Caco-2 (cell line): ENCODE measurements at regions of chr1 and their contacts with region 1.

Region 1: GRCh38 chr1:67053785-67054772 is at the start of gene SLC35D1:
- DNase-seq: peak; percentile 84 to 88
- H3K4me3 ChIP-seq: peak within 1 kb of the TSS; percentile 77
- H3K4me3 Mint-ChIP-seq: peak within 1 kb of the TSS; percentile 83
- H3K27ac Mint-ChIP-seq: peak within 1 kb of the TSS; percentile 87
- H3K4me1 ChIP-seq: peaks cover 9% of the 10 kb centered on the region; the same call in 1 of the 2 replicates
- H3K4me1 Mint-ChIP-seq: peaks cover 3% of the 10 kb centered on the region
- H3K27me3 ChIP-seq: no peaks in the 10 kb centered on the region
- H3K27me3 Mint-ChIP-seq: no peaks in the 10 kb centered on the region
- CTCF ChIP-seq: no peak
- total RNA-seq, gene SLC35D1: 7.1 and 7.7 TPM in 2 replicates

Region 2: GRCh38 chr1:66929999-66930822 is 123.9 kb before region 1 on chr1:
- CTCF ChIA-PET with region 1: no interaction called
- POLR2A ChIA-PET with region 1: interaction called, 3 read pairs
- intact Hi-C with region 1: loop called (anchors 10 kb)
- DNase-seq: peak; percentile 91 to 95
- H3K4me3 ChIP-seq: peak overlapping the region; percentile 77
- H3K4me3 Mint-ChIP-seq: peak overlapping the region; percentile 83
- H3K27ac Mint-ChIP-seq: peak overlapping the region; percentile 83
- H3K4me1 ChIP-seq: peaks cover 7% of the 10 kb centered on the region; the same call in 1 of the 2 replicates
- H3K4me1 Mint-ChIP-seq: peaks cover 11% of the 10 kb centered on the region
- H3K27me3 ChIP-seq: no peaks in the 10 kb centered on the region
- H3K27me3 Mint-ChIP-seq: no peaks in the 10 kb centered on the region
- CTCF ChIP-seq: no peak

Region 3: GRCh38 chr1:67137307-67137753 is 83.3 kb after region 1 on chr1:
- CTCF ChIA-PET with region 1: no interaction called
- POLR2A ChIA-PET with region 1: interaction called, 4 read pairs
- intact Hi-C with region 1: loop called (anchors 2 kb)
- DNase-seq: peak; percentile 7 to 51
- H3K4me3 ChIP-seq: no peak overlapping the region
- H3K4me3 Mint-ChIP-seq: no peak overlapping the region
- H3K27ac Mint-ChIP-seq: no peak overlapping the region
- H3K4me1 ChIP-seq: peaks cover 41% of the 10 kb centered on the region
- H3K4me1 Mint-ChIP-seq: peaks cover 12% of the 10 kb centered on the region
- H3K27me3 ChIP-seq: no peaks in the 10 kb centered on the region
- H3K27me3 Mint-ChIP-seq: no peaks in the 10 kb centered on the region
- CTCF ChIP-seq: no peak

Region 4: DNA sequence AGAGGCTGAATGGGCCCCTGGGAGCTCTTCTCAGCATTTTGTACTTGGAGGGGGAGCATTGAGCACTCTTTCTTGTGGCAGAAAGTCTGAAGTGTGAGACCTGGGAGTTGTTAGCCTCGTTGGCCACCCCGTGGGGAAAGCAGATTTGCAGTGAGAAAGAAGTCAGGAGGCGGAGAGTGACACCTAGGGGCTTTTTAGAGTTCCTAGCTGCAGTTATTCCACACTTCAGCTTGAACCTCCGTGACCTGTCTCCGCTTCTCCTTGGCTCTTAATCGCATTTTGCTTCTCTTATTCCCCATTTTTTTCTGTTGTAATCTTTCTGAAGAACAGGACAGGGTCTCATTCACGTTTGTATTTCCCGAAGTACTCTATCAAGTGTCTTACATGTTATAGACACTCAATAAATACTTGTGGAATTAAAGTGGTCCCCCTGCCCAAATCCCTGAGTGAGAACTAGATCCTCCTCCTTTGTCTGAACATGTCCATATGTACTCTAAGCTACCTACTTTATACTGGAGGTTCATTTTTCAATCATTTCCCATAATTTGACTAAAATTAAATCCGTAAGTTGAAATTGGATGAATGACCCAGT is 95.2 kb after region 1 on chr1:
- CTCF ChIA-PET with region 1: no interaction called
- POLR2A ChIA-PET with region 1: no interaction called
- intact Hi-C with region 1: loop called (anchors 1 kb)
- DNase-seq: peak; percentile 64 to 68
- H3K4me3 ChIP-seq: no peak overlapping the region
- H3K4me3 Mint-ChIP-seq: no peak overlapping the region
- H3K27ac Mint-ChIP-seq: no peak overlapping the region
- H3K4me1 ChIP-seq: peaks cover 7% of the 10 kb centered on the region; the same call in 1 of the 2 replicates
- H3K4me1 Mint-ChIP-seq: no peaks in the 10 kb centered on the region
- H3K27me3 ChIP-seq: no peaks in the 10 kb centered on the region
- H3K27me3 Mint-ChIP-seq: peaks cover 8% of the 10 kb centered on the region
- CTCF ChIP-seq: peak; percentile 55 to 61